Spleen (tissue), 13 donors: ENCODE measurements at regions of chr16 and their contacts with region 1.

Region 1: GRCh38 chr16:180938-181667 is 844 bp downstream of the HBQ1 start:
- DNase-seq: peak; percentile 95
- H3K4me3 ChIP-seq: peak overlapping the region; percentile 2 to 67 (median 36)
- H3K27ac ChIP-seq: peak overlapping the region in 1 of 8 donors; percentile 31
- H3K4me1 ChIP-seq: peaks cover 11 to 31% (median 19%) of the 10 kb centered on the region in 6 donors
- H3K27me3 ChIP-seq: peaks cover 7 to 51% (median 44%) of the 10 kb centered on the region in 7 donors
- CTCF ChIP-seq: peak; percentile 89 to 98 (median 96)
- POLR2A ChIP-seq: no peak

Region 2: GRCh38 chr16:117379-118365 is 63.4 kb before region 1 on chr16:
- intact Hi-C with region 1: loop called (anchors 5 kb)
- DNase-seq: peak; percentile 86
- H3K4me3 ChIP-seq: no peak overlapping the region
- H3K27ac ChIP-seq: no peak overlapping the region
- H3K4me1 ChIP-seq: peaks cover 0 to 24% (median 8%) of the 10 kb centered on the region in 6 donors
- H3K27me3 ChIP-seq: no peaks in the 10 kb centered on the region
- CTCF ChIP-seq: peak; percentile 9 to 81 (median 70)
- POLR2A ChIP-seq: no peak

Region 3: GRCh38 chr16:278863-279366 is 97.8 kb after region 1 on chr16:
- intact Hi-C with region 1: no loop called
- DNase-seq: no peak
- H3K4me3 ChIP-seq: no peak overlapping the region
- H3K27ac ChIP-seq: no peak overlapping the region
- H3K4me1 ChIP-seq: peaks cover 0 to 43% (median 24%) of the 10 kb centered on the region in 6 donors
- H3K27me3 ChIP-seq: peaks cover 4 to 95% (median 46%) of the 10 kb centered on the region in 7 donors
- CTCF ChIP-seq: no peak
- POLR2A ChIP-seq: no peak